ENCODE measurements at regions of chr2 and their contacts with region 1.

Region 1: DNA sequence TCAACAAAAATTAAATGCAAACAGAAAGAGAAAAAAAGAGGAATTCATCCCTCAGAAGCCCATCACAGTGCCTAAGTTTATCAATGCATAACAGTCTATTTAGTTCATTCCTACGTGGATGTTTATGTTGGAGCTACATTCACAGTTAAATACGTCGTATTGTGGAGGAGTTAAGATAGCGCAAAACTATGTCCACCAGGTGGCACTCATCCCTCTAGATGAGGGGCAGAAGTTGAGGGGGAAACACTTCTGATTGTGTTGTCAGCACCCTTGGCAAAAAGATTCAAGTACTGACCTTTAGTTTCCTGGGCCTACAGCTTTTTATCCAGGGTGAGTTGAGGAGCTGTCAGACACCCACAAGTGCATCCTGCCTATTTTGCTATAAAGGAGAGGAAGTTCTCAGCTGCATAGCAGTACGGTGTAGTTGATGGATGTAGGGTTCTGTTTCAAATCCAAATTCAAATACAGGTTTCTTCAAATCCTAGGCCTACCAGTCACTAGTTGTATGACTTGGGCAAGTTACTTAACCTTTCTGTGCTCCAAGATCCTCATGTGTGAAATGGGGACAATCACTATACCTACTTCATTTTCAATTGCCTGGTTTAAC is 26.8 kb upstream of the MYO1B start:
- DNase-seq: peak in 7 of 9 experiments; percentile 27 to 70 (median 52)
- ATAC-seq: peak; percentile 69
- H3K4me3 ChIP-seq: no peak overlapping the region
- H3K4me3 Mint-ChIP-seq: no peak overlapping the region
- H3K27ac ChIP-seq: no peak overlapping the region
- H3K27ac Mint-ChIP-seq: no peak overlapping the region
- H3K4me1 ChIP-seq: no peaks in the 10 kb centered on the region
- H3K4me1 Mint-ChIP-seq: peaks cover 7% of the 10 kb centered on the region
- H3K27me3 ChIP-seq: peaks cover 0 to 3% of the 10 kb centered on the region in 2 experiments
- H3K27me3 Mint-ChIP-seq: no peaks in the 10 kb centered on the region
- CTCF ChIP-seq: peak; percentile 54

Region 2: DNA sequence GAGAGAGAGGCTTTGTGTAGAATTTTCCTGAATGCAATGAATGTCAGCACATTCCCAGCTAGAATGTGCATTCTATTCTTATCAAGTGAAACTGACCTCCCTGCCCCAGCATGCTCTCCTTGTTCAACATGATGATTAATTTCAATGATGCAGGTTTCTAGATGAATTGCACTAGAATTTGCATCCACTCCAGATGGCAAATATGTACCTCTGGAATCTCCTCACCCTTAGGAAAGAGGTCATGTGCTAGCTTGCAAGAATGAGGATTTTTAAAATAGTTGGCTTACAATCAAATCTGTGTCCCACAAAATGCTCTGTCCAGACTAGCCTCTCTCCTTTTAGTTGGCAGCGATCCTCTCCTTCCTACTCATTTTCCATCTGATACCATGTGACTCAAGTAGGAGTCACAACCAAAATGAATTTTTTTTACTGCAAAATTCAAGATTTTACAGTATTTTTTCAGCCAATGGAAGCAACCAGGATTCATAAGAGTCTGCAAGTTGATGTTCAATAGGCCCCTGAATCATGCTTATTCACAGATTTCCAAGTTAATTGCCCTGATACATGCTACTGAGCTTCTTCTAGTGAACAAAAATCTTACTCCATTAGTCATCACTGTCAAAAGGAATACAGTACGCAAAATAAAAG is 46.6 kb before region 1 on chr2:
- CTCF ChIA-PET with region 1: interaction called, 4 read pairs
- POLR2A ChIA-PET with region 1: no interaction called
- intact Hi-C with region 1: loop called in 1 of 2 experiments (anchors 5 kb)
- DNase-seq: no peak
- ATAC-seq: no peak
- H3K4me3 ChIP-seq: no peak overlapping the region
- H3K4me3 Mint-ChIP-seq: no peak overlapping the region
- H3K27ac ChIP-seq: no peak overlapping the region
- H3K27ac Mint-ChIP-seq: no peak overlapping the region
- H3K4me1 ChIP-seq: peaks cover 8% of the 10 kb centered on the region
- H3K4me1 Mint-ChIP-seq: peaks cover 26% of the 10 kb centered on the region
- H3K27me3 ChIP-seq: no peaks in the 10 kb centered on the region
- H3K27me3 Mint-ChIP-seq: no peaks in the 10 kb centered on the region
- CTCF ChIP-seq: no peak

Region 3: GRCh38 chr2:191180713-191181112 is 37.7 kb before region 1 on chr2:
- CTCF ChIA-PET with region 1: no interaction called
- POLR2A ChIA-PET with region 1: no interaction called
- intact Hi-C with region 1: loop called in 1 of 2 experiments (anchors 5 kb)
- DNase-seq: no peak
- ATAC-seq: no peak
- H3K4me3 ChIP-seq: no peak overlapping the region
- H3K4me3 Mint-ChIP-seq: no peak overlapping the region
- H3K27ac ChIP-seq: no peak overlapping the region
- H3K27ac Mint-ChIP-seq: no peak overlapping the region
- H3K4me1 ChIP-seq: no peaks in the 10 kb centered on the region
- H3K4me1 Mint-ChIP-seq: peaks cover 6% of the 10 kb centered on the region
- H3K27me3 ChIP-seq: no peaks in the 10 kb centered on the region
- H3K27me3 Mint-ChIP-seq: no peaks in the 10 kb centered on the region
- CTCF ChIP-seq: no peak

Region 4: GRCh38 chr2:191333911-191334357 is 115.5 kb after region 1 on chr2:
- CTCF ChIA-PET with region 1: no interaction called
- POLR2A ChIA-PET with region 1: no interaction called
- intact Hi-C with region 1: no loop called
- DNase-seq: no peak
- ATAC-seq: no peak
- H3K4me3 ChIP-seq: no peak overlapping the region
- H3K4me3 Mint-ChIP-seq: no peak overlapping the region
- H3K27ac ChIP-seq: no peak overlapping the region
- H3K27ac Mint-ChIP-seq: no peak overlapping the region
- H3K4me1 ChIP-seq: no peaks in the 10 kb centered on the region
- H3K4me1 Mint-ChIP-seq: no peaks in the 10 kb centered on the region
- H3K27me3 ChIP-seq: no peaks in the 10 kb centered on the region
- H3K27me3 Mint-ChIP-seq: no peaks in the 10 kb centered on the region
- CTCF ChIP-seq: no peak